T-cell (primary cell): ENCODE measurements at regions of chr2 and their contacts with region 1.

Region 1: DNA sequence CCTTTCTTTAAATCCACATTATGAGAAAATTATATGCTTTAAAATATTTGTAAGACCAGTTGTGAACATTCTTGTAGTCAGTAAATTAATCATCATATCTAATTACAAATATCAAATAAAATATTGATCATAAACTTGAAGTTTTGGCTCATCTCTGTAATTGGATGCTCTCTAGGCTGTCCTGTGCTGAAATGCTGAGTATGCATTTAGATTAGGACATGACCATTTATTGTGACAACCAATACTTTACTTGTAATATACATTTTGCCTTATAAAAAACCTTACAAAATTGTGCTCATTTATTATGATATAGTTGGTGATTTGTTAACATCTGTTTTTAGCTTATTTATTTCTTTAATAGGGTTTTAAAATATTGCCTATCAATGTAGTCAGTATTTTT is 116.1 kb upstream of the DOCK10 start:
- DNase-seq: no peak
- ATAC-seq: no peak
- H3K4me3 ChIP-seq: no peak overlapping the region
- H3K4me3 Mint-ChIP-seq: no peak overlapping the region
- H3K27ac ChIP-seq: no peak overlapping the region
- H3K27ac Mint-ChIP-seq: no peak overlapping the region
- H3K4me1 ChIP-seq: no peaks in the 10 kb centered on the region
- H3K4me1 Mint-ChIP-seq: no peaks in the 10 kb centered on the region
- H3K27me3 ChIP-seq: no peaks in the 10 kb centered on the region
- H3K27me3 Mint-ChIP-seq: no peaks in the 10 kb centered on the region

Region 2: GRCh38 chr2:223896833-223897311 is 1261.5 kb before region 1 on chr2:
- CTCF ChIA-PET with region 1: no interaction called
- POLR2A ChIA-PET with region 1: no interaction called
- DNase-seq: peak in 2 of 35 experiments; percentile 1 to 3
- ATAC-seq: no peak
- H3K4me3 ChIP-seq: no peak overlapping the region
- H3K4me3 Mint-ChIP-seq: no peak overlapping the region
- H3K27ac ChIP-seq: no peak overlapping the region
- H3K27ac Mint-ChIP-seq: no peak overlapping the region
- H3K4me1 ChIP-seq: no peaks in the 10 kb centered on the region
- H3K4me1 Mint-ChIP-seq: peaks cover 0 to 11% (median 5%) of the 10 kb centered on the region in 3 donors
- H3K27me3 ChIP-seq: no peaks in the 10 kb centered on the region
- H3K27me3 Mint-ChIP-seq: no peaks in the 10 kb centered on the region

Region 3: DNA sequence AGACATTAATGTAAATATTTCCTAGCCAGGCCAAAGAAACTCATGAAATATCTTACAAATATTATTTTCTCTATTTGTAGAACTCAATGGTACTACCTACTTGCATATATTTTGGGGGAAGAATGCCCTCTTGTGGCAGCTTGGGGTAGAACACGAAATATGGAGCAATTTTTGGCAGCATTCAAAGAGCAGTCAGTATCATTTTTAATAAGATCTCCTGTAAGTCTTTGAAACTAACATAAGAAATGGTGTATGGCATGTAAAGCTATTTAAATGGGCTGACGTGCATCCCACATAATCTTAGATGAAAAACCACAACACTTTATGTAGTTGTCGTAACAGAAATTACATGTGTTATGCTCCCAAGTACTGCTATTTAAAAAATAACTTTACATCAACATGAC is 379.9 kb before region 1 on chr2:
- CTCF ChIA-PET with region 1: no interaction called
- POLR2A ChIA-PET with region 1: interaction called in 1 of 2 experiments, 10 read pairs
- DNase-seq: peak; percentile 4 to 75 (median 44)
- ATAC-seq: peak; percentile 45 to 56 (median 54)
- H3K4me3 ChIP-seq: no peak overlapping the region
- H3K4me3 Mint-ChIP-seq: no peak overlapping the region
- H3K27ac ChIP-seq: no peak overlapping the region
- H3K27ac Mint-ChIP-seq: peak overlapping the region in 1 of 2 donors; percentile 13
- H3K4me1 ChIP-seq: no peaks in the 10 kb centered on the region
- H3K4me1 Mint-ChIP-seq: peaks cover 0 to 14% (median 3%) of the 10 kb centered on the region in 3 donors
- H3K27me3 ChIP-seq: no peaks in the 10 kb centered on the region
- H3K27me3 Mint-ChIP-seq: no peaks in the 10 kb centered on the region

Region 4: DNA sequence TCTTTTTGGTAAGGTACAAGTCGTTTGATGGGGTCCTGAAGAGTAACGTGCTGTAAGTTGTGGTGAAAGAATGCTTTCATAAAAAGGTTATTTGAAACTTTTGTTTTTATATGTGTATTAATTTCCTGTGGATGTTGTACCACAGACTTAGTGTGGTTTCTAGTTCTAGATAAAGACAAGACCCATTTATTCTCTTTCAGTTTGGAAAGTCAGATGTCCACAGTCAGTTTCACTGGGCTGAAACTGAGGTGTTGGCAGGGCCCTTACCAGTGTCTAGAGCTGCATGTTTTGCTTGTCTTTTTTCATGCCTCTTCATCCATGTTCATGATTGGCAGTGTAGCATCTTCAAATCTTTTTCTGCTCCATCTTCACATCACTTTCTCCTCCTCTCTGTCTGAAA is 94.0 kb before region 1 on chr2:
- CTCF ChIA-PET with region 1: no interaction called
- POLR2A ChIA-PET with region 1: no interaction called
- DNase-seq: no peak
- ATAC-seq: peak; percentile 40 to 77 (median 68)
- H3K4me3 ChIP-seq: no peak overlapping the region
- H3K4me3 Mint-ChIP-seq: peak overlapping the region; percentile 4 to 25 (median 6)
- H3K27ac ChIP-seq: peak overlapping the region; percentile 50
- H3K27ac Mint-ChIP-seq: peak overlapping the region; percentile 80 to 87
- H3K4me1 ChIP-seq: peaks cover 4 to 8% of the 10 kb centered on the region in 2 experiments
- H3K4me1 Mint-ChIP-seq: peaks cover 23 to 38% (median 30%) of the 10 kb centered on the region in 3 donors
- H3K27me3 ChIP-seq: no peaks in the 10 kb centered on the region
- H3K27me3 Mint-ChIP-seq: no peaks in the 10 kb centered on the region

Region 5: DNA sequence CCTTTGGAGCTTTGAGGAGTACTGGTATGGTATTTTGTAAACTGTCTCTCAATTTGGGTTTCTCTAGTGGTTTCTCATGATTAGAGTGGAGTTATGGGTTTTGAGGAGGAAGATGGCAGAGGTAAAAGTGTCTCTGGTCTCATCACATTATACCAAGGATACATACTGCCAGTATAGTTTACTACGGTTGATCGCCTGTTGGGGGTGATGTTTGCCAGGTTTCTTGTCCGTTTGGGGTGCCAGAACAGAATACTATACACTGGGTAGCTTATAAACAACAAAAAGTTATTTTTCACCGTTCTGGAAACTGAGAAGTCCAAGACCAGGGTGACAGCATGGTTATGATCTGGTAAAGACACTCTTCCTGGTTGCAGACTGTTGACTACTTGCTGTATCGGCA is 534.9 kb after region 1 on chr2:
- CTCF ChIA-PET with region 1: no interaction called
- POLR2A ChIA-PET with region 1: no interaction called
- DNase-seq: no peak
- ATAC-seq: no peak
- H3K4me3 ChIP-seq: no peak overlapping the region
- H3K4me3 Mint-ChIP-seq: no peak overlapping the region
- H3K27ac ChIP-seq: no peak overlapping the region
- H3K27ac Mint-ChIP-seq: no peak overlapping the region
- H3K4me1 ChIP-seq: no peaks in the 10 kb centered on the region
- H3K4me1 Mint-ChIP-seq: no peaks in the 10 kb centered on the region
- H3K27me3 ChIP-seq: no peaks in the 10 kb centered on the region
- H3K27me3 Mint-ChIP-seq: peaks cover 11 to 13% of the 10 kb centered on the region in 2 donors